ENCODE measurements at regions of chr5 and their contacts with region 1.

Region 1: GRCh38 chr5:122192497-122193496 is 63.5 kb downstream of the ZNF474 start:
- DNase-seq: peak; percentile 89
- H3K4me3 Mint-ChIP-seq: no peak overlapping the region
- H3K27ac Mint-ChIP-seq: no peak overlapping the region
- H3K4me1 Mint-ChIP-seq: peaks cover 5% of the 10 kb centered on the region
- H3K27me3 Mint-ChIP-seq: no peaks in the 10 kb centered on the region
- CTCF ChIP-seq: peak; percentile 77

Region 2: GRCh38 chr5:121819682-121820261 is 373.0 kb before region 1 on chr5:
- CTCF ChIA-PET with region 1: no interaction called
- POLR2A ChIA-PET with region 1: no interaction called
- intact Hi-C with region 1: no loop called
- DNase-seq: no peak
- H3K4me3 Mint-ChIP-seq: no peak overlapping the region
- H3K27ac Mint-ChIP-seq: no peak overlapping the region
- H3K4me1 Mint-ChIP-seq: no peaks in the 10 kb centered on the region
- H3K27me3 Mint-ChIP-seq: no peaks in the 10 kb centered on the region
- CTCF ChIP-seq: no peak

Region 3: DNA sequence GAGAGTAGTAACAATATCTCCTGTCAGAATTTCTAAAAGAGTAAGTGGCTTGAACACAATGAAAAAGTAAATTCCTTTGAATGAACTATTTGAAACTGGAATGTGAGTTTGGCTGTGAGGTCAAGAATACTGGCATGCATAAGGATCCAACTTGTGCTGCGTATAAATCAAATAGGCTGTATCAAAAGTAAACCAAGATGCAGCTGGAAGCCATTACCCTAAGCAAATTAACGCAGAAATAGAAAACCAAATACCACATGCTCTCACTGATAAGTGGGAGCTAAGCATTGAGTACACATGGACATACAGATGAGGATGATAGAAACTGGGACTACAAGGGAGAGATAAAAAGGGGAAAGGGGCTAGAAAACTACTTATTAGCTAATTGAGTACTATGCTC is 255.0 kb before region 1 on chr5:
- CTCF ChIA-PET with region 1: no interaction called
- POLR2A ChIA-PET with region 1: no interaction called
- intact Hi-C with region 1: no loop called
- DNase-seq: no peak
- H3K4me3 Mint-ChIP-seq: no peak overlapping the region
- H3K27ac Mint-ChIP-seq: no peak overlapping the region
- H3K4me1 Mint-ChIP-seq: no peaks in the 10 kb centered on the region
- H3K27me3 Mint-ChIP-seq: no peaks in the 10 kb centered on the region
- CTCF ChIP-seq: no peak

Region 4: GRCh38 chr5:122156724-122157325 is 36.0 kb before region 1 on chr5:
- CTCF ChIA-PET with region 1: interaction called, 14 read pairs
- POLR2A ChIA-PET with region 1: interaction called, 6 read pairs
- intact Hi-C with region 1: no loop called
- DNase-seq: peak; percentile 73
- H3K4me3 Mint-ChIP-seq: no peak overlapping the region
- H3K27ac Mint-ChIP-seq: no peak overlapping the region
- H3K4me1 Mint-ChIP-seq: peaks cover 12% of the 10 kb centered on the region
- H3K27me3 Mint-ChIP-seq: no peaks in the 10 kb centered on the region
- CTCF ChIP-seq: peak; percentile 70

Region 5: DNA sequence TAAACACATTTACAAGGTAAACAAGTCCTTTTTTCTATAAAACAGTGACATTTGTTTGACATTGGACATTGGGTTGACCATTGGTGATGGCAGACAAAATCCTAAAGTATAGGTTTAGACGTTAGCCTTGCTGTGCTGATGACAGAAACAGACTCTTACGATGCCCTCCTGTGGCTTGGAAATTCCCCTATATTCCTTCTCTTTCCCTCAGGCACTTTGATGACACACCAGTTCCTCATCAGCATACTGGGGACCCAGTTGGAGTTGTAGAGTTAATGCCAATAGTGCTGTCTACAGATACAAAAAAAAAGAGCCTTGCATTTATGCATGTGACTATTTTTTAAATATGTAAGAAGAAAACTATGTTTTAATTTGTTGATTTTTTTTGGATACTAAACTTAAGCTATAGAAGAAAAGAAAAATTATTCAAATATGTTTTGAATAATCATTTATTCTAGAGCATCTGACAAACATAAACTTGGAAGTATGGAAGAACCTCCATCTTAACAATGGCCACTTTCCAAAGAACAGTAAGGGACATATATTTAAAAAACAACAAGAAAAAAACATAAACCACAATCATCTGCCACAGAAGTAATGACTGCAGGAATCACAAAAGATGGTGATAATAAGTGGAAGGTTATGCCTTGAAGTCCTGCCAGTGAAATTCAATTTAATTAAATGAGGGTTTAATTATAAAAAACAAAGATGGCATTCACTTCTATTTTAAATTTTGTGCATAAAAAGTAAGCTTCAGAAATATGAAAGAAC is 43.7 kb after region 1 on chr5:
- CTCF ChIA-PET with region 1: interaction called, 23 read pairs
- POLR2A ChIA-PET with region 1: no interaction called
- intact Hi-C with region 1: no loop called
- DNase-seq: peak; percentile 77
- H3K4me3 Mint-ChIP-seq: no peak overlapping the region
- H3K27ac Mint-ChIP-seq: no peak overlapping the region
- H3K4me1 Mint-ChIP-seq: peaks cover 8% of the 10 kb centered on the region
- H3K27me3 Mint-ChIP-seq: no peaks in the 10 kb centered on the region
- CTCF ChIP-seq: no peak

Region 6: GRCh38 chr5:122311961-122312590 is 119.3 kb after region 1 on chr5 and contains the start of gene SNCAIP:
- CTCF ChIA-PET with region 1: interaction called, 12 read pairs
- POLR2A ChIA-PET with region 1: no interaction called
- intact Hi-C with region 1: loop called (anchors 5 kb)
- DNase-seq: peak; percentile 56
- H3K4me3 Mint-ChIP-seq: peak within 1 kb of the TSS; percentile 77
- H3K27ac Mint-ChIP-seq: no peak within 1 kb of the TSS
- H3K4me1 Mint-ChIP-seq: peaks cover 13% of the 10 kb centered on the region
- H3K27me3 Mint-ChIP-seq: peaks cover 15% of the 10 kb centered on the region
- CTCF ChIP-seq: no peak
- total RNA-seq, gene SNCAIP: 0.12 and 0.21 TPM in 2 replicates

Region 7: GRCh38 chr5:122415030-122415800 is 222.4 kb after region 1 on chr5:
- CTCF ChIA-PET with region 1: interaction called, 402 read pairs
- POLR2A ChIA-PET with region 1: interaction called, 11 read pairs
- intact Hi-C with region 1: loop called (anchors 1 kb)
- DNase-seq: peak; percentile 86
- H3K4me3 Mint-ChIP-seq: no peak overlapping the region
- H3K27ac Mint-ChIP-seq: no peak overlapping the region
- H3K4me1 Mint-ChIP-seq: peaks cover 6% of the 10 kb centered on the region
- H3K27me3 Mint-ChIP-seq: peaks cover 17% of the 10 kb centered on the region
- CTCF ChIP-seq: peak; percentile 87

Region 8: DNA sequence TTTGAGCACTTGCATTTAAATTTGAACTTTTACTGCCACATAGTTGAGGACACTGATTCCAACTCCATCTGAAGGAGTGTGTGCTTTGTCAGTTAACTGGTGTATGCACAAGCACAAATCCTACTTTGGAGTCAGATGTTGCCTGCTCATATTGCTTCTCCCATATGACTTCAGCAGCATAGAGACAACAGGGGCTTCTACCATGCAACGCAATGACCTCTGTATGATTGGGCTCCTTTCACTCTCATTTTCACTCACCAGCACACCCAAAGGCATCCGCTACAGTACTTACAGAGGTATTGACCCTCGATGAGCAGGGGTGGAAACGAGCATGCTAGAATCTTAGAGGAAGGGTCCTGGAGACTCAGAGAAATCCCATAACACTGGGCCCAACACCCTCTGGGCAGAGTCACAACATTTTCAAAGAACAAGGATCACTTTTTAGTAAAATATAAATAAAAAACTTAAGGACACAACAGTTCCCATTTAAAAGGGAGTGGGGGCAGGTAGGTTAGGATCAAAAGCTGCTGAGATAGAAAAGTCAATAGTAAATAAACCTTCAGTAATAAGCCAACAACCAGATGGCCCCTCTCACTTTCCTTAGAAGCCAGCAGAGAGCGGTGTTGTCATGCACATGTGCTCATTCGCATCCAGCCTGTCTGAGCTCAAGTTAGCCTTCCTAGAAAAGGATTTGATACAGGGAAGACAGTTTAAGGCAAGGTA is 323.1 kb after region 1 on chr5:
- CTCF ChIA-PET with region 1: interaction called, 10 read pairs
- POLR2A ChIA-PET with region 1: no interaction called
- intact Hi-C with region 1: no loop called
- DNase-seq: peak; percentile 89
- H3K4me3 Mint-ChIP-seq: no peak overlapping the region
- H3K27ac Mint-ChIP-seq: no peak overlapping the region
- H3K4me1 Mint-ChIP-seq: no peaks in the 10 kb centered on the region
- H3K27me3 Mint-ChIP-seq: no peaks in the 10 kb centered on the region
- CTCF ChIP-seq: peak; percentile 94

Region 9: GRCh38 chr5:122561209-122561608 is 368.4 kb after region 1 on chr5:
- CTCF ChIA-PET with region 1: no interaction called
- POLR2A ChIA-PET with region 1: no interaction called
- intact Hi-C with region 1: no loop called
- DNase-seq: no peak
- H3K4me3 Mint-ChIP-seq: no peak overlapping the region
- H3K27ac Mint-ChIP-seq: no peak overlapping the region
- H3K4me1 Mint-ChIP-seq: no peaks in the 10 kb centered on the region
- H3K27me3 Mint-ChIP-seq: no peaks in the 10 kb centered on the region
- CTCF ChIP-seq: no peak

Region 10: GRCh38 chr5:122924203-122924602 is 731.4 kb after region 1 on chr5:
- CTCF ChIA-PET with region 1: no interaction called
- POLR2A ChIA-PET with region 1: no interaction called
- intact Hi-C with region 1: no loop called
- DNase-seq: peak; percentile 81
- H3K4me3 Mint-ChIP-seq: no peak overlapping the region
- H3K27ac Mint-ChIP-seq: no peak overlapping the region
- H3K4me1 Mint-ChIP-seq: peaks cover 6% of the 10 kb centered on the region
- H3K27me3 Mint-ChIP-seq: no peaks in the 10 kb centered on the region
- CTCF ChIP-seq: no peak

Measured in MCF 10A (cell line).